Naive thymus-derived CD8-positive, alpha-beta T cell (primary cell): ENCODE measurements at regions of chr14 and their contacts with region 1.

Region 1: GRCh38 chr14:75293920-75294642 is 15.5 kb downstream of the FOS start:
- DNase-seq: peak; percentile 92 to 98 (median 96)
- ATAC-seq: peak; percentile 78 to 85
- H3K4me3 Mint-ChIP-seq: peak overlapping the region; percentile 77 to 96 (median 90)
- H3K27ac Mint-ChIP-seq: peak overlapping the region; percentile 48 to 98 (median 96)
- H3K4me1 Mint-ChIP-seq: peaks cover 9 to 23% (median 17%) of the 10 kb centered on the region in 4 donors
- H3K27me3 Mint-ChIP-seq: peaks cover 0 to 1% (median 0%) of the 10 kb centered on the region in 5 donors

Region 2: DNA sequence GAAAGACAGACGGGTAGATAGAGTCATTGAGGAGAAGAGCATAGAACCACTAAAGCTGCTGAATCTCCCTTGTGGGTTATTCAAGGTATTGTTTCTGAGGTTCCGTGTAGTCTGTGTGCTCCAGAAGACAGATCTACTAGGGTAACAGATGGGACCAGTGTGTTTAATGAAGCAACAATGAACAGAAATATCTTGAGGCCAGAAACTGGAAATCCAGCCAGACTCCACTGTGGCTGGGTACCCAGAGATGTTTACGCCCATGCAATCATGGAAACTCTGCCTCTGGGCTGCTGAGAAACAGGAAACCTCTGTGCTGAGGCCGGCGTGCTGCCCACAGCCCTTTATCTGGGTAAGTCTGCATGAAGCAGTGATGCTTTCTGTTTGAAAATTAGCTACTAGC is 426.4 kb before region 1 on chr14:
- POLR2A ChIA-PET with region 1: interaction called, 10 read pairs
- DNase-seq: peak; percentile 26 to 79 (median 32)
- ATAC-seq: peak; percentile 94 to 97
- H3K4me3 Mint-ChIP-seq: peak overlapping the region; percentile 8 to 80 (median 54)
- H3K27ac Mint-ChIP-seq: peak overlapping the region; percentile 59 to 94 (median 88)
- H3K4me1 Mint-ChIP-seq: peaks cover 18 to 39% (median 28%) of the 10 kb centered on the region in 4 donors
- H3K27me3 Mint-ChIP-seq: no peaks in the 10 kb centered on the region

Region 3: GRCh38 chr14:75126679-75127473 is 167.2 kb before region 1 on chr14 and contains the start of gene NEK9:
- POLR2A ChIA-PET with region 1: interaction called, 15 read pairs
- DNase-seq: peak; percentile 77 to 95 (median 88)
- ATAC-seq: peak; percentile 88 to 91
- H3K4me3 Mint-ChIP-seq: peak within 1 kb of the TSS; percentile 80 to 98 (median 96)
- H3K27ac Mint-ChIP-seq: peak within 1 kb of the TSS; percentile 95 to 99 (median 98)
- H3K4me1 Mint-ChIP-seq: peaks cover 28 to 50% (median 43%) of the 10 kb centered on the region in 4 donors
- H3K27me3 Mint-ChIP-seq: no peaks in the 10 kb centered on the region
- polyA plus RNA-seq, gene NEK9: 18.5 to 19.8 (median 19.0) TPM

Region 4: DNA sequence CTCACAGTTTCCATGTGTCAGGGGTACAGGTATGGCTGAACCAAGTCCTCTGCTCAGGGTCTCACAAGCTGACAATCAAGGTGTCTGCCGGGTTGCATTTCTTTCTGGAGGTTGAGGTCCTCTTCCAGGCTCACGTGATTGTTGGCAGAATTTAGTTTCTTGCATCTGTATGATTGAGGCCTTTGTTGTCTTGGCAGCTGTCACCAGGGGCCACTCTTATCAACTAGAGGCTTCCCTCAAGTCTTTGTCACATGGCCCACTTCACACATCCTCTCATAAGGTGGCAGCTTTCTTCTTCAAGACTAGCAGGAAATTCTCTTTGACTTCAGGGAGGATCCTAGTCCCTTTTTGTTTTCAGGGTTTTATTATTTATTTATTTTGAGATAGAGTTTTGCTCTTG is 61.5 kb before region 1 on chr14:
- POLR2A ChIA-PET with region 1: interaction called, 11 read pairs
- DNase-seq: peak; percentile 14 to 81 (median 58)
- ATAC-seq: peak; percentile 91 to 96
- H3K4me3 Mint-ChIP-seq: peak overlapping the region in 3 of 10 donors; percentile 0 to 38 (median 28)
- H3K27ac Mint-ChIP-seq: peak overlapping the region; percentile 54 to 96 (median 86)
- H3K4me1 Mint-ChIP-seq: peaks cover 35 to 67% (median 56%) of the 10 kb centered on the region in 4 donors
- H3K27me3 Mint-ChIP-seq: no peaks in the 10 kb centered on the region

Region 5: GRCh38 chr14:75258615-75259466 is 35.2 kb before region 1 on chr14:
- POLR2A ChIA-PET with region 1: interaction called, 12 read pairs
- DNase-seq: peak; percentile 98 to 100 (median 99)
- ATAC-seq: peak; percentile 82 to 86
- H3K4me3 Mint-ChIP-seq: peak overlapping the region; percentile 77 to 92 (median 87)
- H3K27ac Mint-ChIP-seq: peak overlapping the region; percentile 99 to 100 (median 100)
- H3K4me1 Mint-ChIP-seq: peaks cover 6 to 41% (median 35%) of the 10 kb centered on the region in 4 donors
- H3K27me3 Mint-ChIP-seq: peaks cover 0 to 1% (median 0%) of the 10 kb centered on the region in 5 donors

Region 6: DNA sequence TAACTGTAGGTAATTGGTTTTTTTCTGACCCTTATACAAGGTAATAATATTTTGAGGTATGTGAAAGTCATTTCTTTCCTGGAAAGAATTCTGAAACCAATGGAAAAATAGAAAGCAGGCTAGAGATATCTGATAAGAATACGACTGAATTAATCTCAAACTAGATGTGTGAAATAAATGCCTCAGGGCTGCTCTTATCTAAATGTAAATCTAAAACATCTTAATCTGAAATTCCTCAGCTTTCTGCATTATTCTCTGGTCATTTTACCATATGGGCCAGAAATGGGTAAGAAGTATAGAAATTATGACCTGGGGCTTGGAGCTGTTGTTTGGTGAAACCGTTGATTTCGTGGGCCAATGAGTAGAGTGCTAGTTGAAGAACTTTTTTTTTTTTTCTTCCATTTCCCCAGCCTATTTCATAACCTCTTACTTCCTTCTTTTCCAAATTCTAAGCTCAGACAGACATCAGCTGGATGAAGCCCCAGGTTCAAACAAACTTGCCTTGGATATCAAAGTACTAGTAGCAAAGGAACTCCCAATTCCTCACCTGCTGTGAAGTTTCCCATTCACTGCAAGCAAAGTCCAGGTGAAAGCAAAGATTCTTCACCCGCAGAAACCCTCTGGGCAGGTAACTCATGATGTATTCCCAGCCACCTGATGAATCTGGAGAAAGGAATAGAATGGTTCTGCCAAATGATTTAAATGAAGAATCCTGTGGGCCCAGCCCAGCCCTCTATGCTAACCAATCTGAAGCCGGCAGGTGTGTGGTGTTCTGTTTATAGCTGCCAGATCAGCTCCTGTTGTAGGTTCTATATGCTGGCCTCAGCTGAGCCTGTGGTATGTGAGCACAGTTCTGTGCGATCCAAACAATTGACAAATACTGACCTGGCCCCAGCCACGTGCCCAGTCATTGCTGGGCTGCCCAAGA is 25.2 kb before region 1 on chr14:
- POLR2A ChIA-PET with region 1: no interaction called
- DNase-seq: no peak
- ATAC-seq: no peak
- H3K4me3 Mint-ChIP-seq: no peak overlapping the region
- H3K27ac Mint-ChIP-seq: peak overlapping the region in 3 of 10 donors; percentile 6 to 81 (median 57)
- H3K4me1 Mint-ChIP-seq: peaks cover 0 to 24% (median 6%) of the 10 kb centered on the region in 4 donors
- H3K27me3 Mint-ChIP-seq: peaks cover 0 to 9% (median 6%) of the 10 kb centered on the region in 5 donors

Region 7: DNA sequence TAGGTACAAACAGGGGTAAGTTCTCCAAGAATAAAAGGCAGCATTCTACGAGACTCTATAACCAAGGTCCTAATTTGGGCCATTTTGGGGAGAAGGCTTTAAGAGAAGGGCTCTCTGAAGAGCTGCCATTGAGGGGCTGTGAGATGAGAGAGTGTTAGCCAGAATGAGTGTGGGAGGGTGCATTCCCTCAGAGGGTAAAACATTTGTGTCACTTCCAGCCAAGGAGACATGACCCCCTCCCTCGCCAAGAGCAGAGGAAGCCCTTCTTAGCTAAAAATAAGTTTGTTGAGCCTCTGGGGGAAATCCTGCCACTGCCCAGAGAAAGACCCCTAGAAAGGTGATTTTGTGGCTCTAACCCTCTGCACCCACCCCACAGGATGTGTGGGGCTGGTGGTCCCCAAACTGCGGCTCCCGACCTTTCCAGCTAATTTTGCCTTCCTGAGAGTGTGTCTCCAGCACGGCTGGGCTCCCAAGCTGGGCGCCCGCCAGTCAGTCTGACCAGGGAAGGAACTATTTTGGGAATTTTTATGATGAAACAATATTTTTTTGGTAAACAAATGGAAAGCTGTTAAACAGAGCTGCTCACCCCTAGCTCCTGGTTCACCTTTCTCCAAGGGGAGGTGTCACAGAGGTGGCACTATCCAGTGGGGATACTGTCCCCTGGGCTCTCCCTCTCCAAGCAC is 67.8 kb after region 1 on chr14:
- POLR2A ChIA-PET with region 1: no interaction called
- DNase-seq: no peak
- ATAC-seq: no peak
- H3K4me3 Mint-ChIP-seq: no peak overlapping the region
- H3K27ac Mint-ChIP-seq: no peak overlapping the region
- H3K4me1 Mint-ChIP-seq: peaks cover 0 to 1% (median 0%) of the 10 kb centered on the region in 4 donors
- H3K27me3 Mint-ChIP-seq: peaks cover 2 to 16% (median 3%) of the 10 kb centered on the region in 5 donors